Head of caudate nucleus (tissue), 42 donors: ENCODE measurements at regions of chr13 and their contacts with region 1.

Region 1: DNA sequence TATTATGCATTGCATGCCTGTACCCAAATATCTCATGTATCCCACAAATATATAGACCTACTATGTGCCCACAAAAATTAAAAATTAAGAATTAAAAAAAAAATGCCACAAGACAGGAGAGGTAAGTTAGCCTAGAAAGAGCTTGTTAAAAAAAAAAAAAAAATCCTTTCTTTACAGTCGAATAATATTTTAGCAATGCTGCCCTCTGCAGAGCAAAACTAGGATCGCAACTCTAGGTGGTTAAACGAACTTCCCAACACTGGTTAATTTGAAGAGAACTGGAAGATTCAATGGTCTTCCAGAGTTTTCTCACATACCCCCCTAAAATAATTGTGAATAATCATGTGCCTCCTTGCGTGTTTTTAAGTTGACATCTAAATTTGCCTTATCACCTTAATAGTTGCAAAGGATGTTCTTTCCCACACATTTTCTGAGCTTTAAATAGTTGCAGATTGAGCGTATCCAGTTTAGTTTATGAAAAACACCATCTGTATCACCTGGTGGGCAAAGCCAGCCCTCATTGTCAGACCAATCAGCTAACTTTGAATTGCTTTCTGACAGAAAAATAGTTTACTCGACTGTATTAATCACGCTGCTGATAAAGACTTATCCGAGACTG is 47.4 kb upstream of the RCBTB2 start:
- DNase-seq: peak in 38 of 42 donors; percentile 39 to 92 (median 76)

Region 2: GRCh38 chr13:48094781-48095502 is 485.4 kb before region 1 on chr13 and contains the start of gene MED4:
- intact Hi-C with region 1: loop called (anchors 10 kb)
- DNase-seq: peak; percentile 85 to 99 (median 96)

Region 3: GRCh38 chr13:48131533-48131932 is 448.8 kb before region 1 on chr13:
- intact Hi-C with region 1: loop called (anchors 10 kb)
- DNase-seq: no peak

Region 4: GRCh38 chr13:48233046-48233907 is 347.0 kb before region 1 on chr13 and contains the start of gene ITM2B:
- intact Hi-C with region 1: loop called (anchors 10 kb)
- DNase-seq: peak; percentile 61 to 93 (median 83)

Region 5: DNA sequence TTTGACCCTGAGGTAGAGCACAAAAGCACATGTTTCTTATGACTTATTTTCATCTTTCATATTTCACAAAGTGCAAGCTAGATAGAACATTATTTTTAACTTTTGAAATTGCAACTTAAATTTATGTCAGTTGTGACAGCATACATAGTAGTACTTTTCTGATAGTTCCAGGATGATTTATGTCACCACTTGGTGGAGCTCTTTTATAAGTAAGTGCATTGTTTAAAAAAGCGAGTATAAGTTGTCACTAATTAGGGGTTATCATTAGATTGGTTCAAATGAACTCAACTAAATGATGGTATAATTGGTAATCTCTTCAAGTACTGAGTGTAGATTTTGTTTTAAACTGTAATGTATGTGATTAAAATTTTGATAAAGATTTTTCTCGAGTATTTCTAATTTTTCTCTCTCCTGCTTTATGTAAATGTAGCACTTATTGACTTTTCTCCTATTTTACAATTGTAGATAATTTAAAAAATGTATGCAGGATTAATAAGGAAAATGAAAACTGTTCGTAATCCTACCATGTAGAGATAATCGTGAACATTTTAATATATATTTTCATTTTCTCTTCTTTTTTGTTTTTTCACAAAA is 245.7 kb before region 1 on chr13:
- intact Hi-C with region 1: loop called (anchors 5 kb)
- DNase-seq: peak in 1 of 42 donors; percentile 7

Region 6: DNA sequence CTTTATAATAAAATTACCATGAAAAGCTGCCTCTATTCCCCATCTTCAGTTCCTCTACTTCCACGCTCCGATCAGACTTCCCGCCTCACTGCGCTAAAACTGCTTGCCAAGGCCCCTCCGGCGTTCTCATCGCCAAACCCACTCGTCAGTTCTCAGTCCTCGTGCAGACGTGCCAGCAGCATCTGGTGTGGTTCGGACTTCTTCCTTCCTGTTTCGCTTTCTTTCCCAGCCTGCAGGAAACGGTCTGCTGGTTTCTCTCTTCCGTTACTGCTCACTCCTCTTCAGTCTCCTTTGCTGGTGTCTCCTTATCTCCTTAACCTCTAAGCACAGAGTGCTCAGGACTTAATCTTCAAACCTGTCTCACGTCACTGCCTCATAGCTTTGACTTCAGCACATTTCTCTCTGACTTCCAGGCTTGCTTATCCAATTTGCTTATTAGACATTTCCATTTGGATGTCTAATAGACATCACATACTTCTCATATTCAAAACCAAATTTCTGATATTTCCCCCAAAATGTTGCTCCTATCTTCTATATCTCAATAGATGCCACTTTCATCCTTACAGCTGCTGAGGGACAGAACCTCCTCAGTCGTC is 87.7 kb before region 1 on chr13:
- intact Hi-C with region 1: loop called (anchors 10 kb)
- DNase-seq: peak in 40 of 42 donors; percentile 19 to 79 (median 57)

Region 7: GRCh38 chr13:48532506-48533499 is 47.5 kb before region 1 on chr13 and contains the start of gene RCBTB2:
- intact Hi-C with region 1: loop called (anchors 5 kb)
- DNase-seq: peak; percentile 93 to 99 (median 98)